HEK293 (cell line): ENCODE measurements at regions of chr6 and their contacts with region 1.

Region 1: GRCh38 chr6:99746261-99746895 is 139.7 kb downstream of the PRDM13 start:
- H3K4me3 ChIP-seq: no peak overlapping the region
- H3K27ac ChIP-seq: no peak overlapping the region
- H3K4me1 ChIP-seq: no peaks in the 10 kb centered on the region
- CTCF ChIP-seq: peak; percentile 50

Region 2: GRCh38 chr6:99026135-99026534 is 720.2 kb before region 1 on chr6:
- CTCF ChIA-PET with region 1: no interaction called
- POLR2A ChIA-PET with region 1: no interaction called
- H3K4me3 ChIP-seq: no peak overlapping the region
- H3K27ac ChIP-seq: no peak overlapping the region
- H3K4me1 ChIP-seq: no peaks in the 10 kb centered on the region
- CTCF ChIP-seq: no peak

Region 3: GRCh38 chr6:99467509-99468106 is 278.8 kb before region 1 on chr6:
- CTCF ChIA-PET with region 1: interaction called, 22 read pairs
- POLR2A ChIA-PET with region 1: no interaction called
- H3K4me3 ChIP-seq: no peak overlapping the region
- H3K27ac ChIP-seq: no peak overlapping the region
- H3K4me1 ChIP-seq: no peaks in the 10 kb centered on the region
- CTCF ChIP-seq: 0 out of 2 replicates have a peak, but pooled peaks have one; percentile 21

Region 4: DNA sequence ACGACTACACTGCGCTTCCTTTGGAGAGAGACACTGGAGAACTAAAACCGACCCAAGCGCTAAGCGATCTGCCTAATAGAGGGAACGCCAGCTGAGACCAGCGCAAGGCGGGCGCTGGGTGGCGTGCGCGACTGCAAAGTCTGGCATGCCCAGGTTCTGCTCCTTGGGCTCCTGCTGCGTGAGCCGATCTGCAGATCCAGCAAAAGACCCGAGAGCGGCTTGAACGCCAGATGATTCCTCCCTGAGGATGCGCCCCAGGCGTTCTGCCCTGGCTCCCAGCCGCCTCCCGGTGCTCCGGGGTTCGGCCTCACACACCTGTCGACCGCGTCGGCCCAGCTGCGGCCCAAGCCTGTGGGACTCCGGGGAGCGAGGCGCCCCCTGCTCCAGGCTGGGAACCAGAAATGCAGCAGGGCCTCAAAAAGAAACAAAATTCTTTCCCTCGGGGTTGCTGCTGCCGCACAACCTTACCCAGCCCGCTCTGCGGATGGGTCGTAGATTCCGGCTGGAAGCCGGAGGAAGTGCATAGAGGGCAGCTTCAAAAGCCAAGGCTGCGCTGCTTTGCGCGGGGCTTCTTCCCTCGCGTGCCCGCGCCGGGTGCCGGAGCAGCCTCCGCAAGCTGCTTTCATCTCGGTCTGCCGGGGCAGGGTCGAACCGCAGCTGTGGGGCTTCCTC is 157.6 kb before region 1 on chr6:
- CTCF ChIA-PET with region 1: interaction called, 35 read pairs
- POLR2A ChIA-PET with region 1: no interaction called
- H3K4me3 ChIP-seq: peak overlapping the region; percentile 51
- H3K27ac ChIP-seq: peak overlapping the region; percentile 50; the same call in 1 of the 2 replicates
- H3K4me1 ChIP-seq: no peaks in the 10 kb centered on the region; the same call in 1 of the 2 replicates
- CTCF ChIP-seq: peak; percentile 92

Region 5: DNA sequence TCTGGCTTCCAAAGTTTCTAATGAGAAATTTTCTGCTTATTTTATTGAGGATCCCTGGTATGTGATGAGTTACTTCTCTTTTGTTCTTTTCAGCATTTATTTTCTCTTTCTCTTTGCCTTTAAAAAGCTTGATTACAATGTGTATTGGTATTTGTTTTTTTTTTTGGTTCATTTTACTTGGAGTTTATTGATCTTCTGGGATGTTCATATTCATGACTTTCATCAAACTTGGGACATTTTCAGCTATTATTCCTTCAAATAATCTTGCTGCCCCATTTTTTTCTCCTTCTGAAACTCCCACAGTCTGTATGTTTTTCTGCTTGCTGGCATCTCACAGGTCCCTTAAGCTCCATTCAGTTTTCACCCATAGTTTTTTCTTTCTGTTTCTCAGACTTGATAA is 37.3 kb before region 1 on chr6:
- CTCF ChIA-PET with region 1: interaction called, 10 read pairs
- POLR2A ChIA-PET with region 1: no interaction called
- H3K4me3 ChIP-seq: no peak overlapping the region
- H3K27ac ChIP-seq: no peak overlapping the region
- H3K4me1 ChIP-seq: no peaks in the 10 kb centered on the region
- CTCF ChIP-seq: no peak

Region 6: DNA sequence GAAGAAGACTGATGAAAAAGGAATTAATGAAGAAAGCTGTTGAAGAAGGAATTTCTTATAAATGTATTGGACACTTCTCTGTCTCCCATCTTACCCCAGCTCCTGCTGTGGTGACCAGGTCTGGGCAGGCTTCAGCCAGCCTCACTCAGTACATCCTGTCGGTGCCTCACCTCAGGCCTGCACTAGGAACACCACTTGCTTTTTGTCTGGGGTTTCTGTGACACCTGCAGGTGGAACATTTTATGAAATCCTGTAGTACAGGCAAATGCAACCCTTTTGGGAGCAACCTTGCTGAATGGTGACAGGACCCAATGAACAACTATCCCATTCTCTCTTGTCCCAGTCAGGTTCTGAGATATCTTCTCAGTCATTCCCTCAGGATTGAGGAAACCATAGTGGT is 10.1 kb before region 1 on chr6:
- CTCF ChIA-PET with region 1: interaction called, 11 read pairs
- POLR2A ChIA-PET with region 1: no interaction called
- H3K4me3 ChIP-seq: no peak overlapping the region
- H3K27ac ChIP-seq: no peak overlapping the region
- H3K4me1 ChIP-seq: no peaks in the 10 kb centered on the region
- CTCF ChIP-seq: no peak

Region 7: GRCh38 chr6:99761711-99762110 is 15.3 kb after region 1 on chr6:
- CTCF ChIA-PET with region 1: interaction called, 20 read pairs
- POLR2A ChIA-PET with region 1: no interaction called
- H3K4me3 ChIP-seq: no peak overlapping the region
- H3K27ac ChIP-seq: no peak overlapping the region
- H3K4me1 ChIP-seq: no peaks in the 10 kb centered on the region
- CTCF ChIP-seq: no peak

Region 8: DNA sequence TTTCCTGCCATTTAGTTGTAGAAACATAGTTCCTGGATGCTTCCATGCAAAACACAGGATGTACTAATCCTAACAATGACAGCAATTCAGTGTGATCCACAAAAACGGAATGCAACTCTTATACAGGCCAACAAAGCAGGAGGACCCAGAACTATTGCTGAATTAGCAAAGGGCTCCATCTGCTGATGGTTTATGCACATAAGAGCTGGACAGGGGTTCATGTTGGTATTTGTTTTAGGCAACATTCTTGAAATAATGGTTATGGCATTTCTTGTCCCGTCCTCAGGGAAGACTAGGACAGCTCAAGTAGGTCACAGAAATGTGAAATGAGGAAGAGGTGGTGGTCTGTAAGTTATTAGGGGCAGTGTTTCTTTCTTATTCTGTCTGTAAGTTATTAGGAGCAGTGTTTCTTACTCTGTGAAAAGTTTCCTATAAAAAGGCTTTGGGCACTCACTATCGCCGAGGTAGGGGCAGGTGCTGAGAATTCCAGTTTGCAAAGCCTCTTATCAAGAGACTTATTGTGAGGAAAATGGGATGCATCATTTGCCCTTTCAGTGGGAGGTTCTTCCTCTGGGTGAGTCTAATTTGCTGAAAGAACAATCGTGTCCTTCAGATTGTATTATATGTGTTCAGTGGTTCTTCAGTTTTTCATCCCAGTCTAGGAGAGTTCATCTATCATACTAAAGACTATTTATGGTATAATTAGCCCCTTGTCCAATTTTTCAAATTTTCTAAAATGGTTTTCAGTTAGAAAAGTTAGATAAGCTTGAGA is 76.5 kb after region 1 on chr6:
- CTCF ChIA-PET with region 1: interaction called, 10 read pairs
- POLR2A ChIA-PET with region 1: no interaction called
- H3K4me3 ChIP-seq: no peak overlapping the region
- H3K27ac ChIP-seq: no peak overlapping the region
- H3K4me1 ChIP-seq: no peaks in the 10 kb centered on the region
- CTCF ChIP-seq: peak; percentile 52; the same call in 1 of the 2 replicates